ENCODE measurements at regions of chr4 and their contacts with region 1.

Region 1: DNA sequence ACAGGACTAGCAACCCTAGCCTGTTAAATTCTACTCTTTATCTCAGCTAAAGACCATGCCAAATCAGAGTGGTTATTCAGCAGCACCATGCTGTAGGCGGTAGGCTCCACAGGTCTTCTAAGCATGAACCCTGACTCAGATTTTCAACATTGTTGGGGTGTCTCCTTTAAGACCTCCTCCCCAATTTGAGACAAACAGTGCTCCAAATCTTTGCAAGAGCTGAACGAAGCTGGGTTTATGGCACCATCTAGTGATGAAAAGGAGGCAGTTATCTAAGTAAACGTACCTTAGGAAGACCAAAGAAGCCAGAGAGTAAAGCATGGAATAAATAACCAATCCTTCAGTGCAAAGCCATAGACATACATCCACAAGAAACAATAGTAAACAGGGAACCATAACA is 334.5 kb upstream of the SLC7A11 start:
- DNase-seq: peak; percentile 73
- H3K4me3 ChIP-seq: no peak overlapping the region
- H3K27ac ChIP-seq: no peak overlapping the region
- H3K4me1 ChIP-seq: no peaks in the 10 kb centered on the region
- H3K27me3 ChIP-seq: no peaks in the 10 kb centered on the region
- CTCF ChIP-seq: peak; percentile 75

Region 2: GRCh38 chr4:137735561-137736104 is 841.1 kb before region 1 on chr4:
- CTCF ChIA-PET with region 1: interaction called, 3 read pairs
- POLR2A ChIA-PET with region 1: no interaction called
- intact Hi-C with region 1: loop called (anchors 10 kb)
- DNase-seq: no peak
- H3K4me3 ChIP-seq: no peak overlapping the region
- H3K27ac ChIP-seq: no peak overlapping the region
- H3K4me1 ChIP-seq: no peaks in the 10 kb centered on the region
- H3K27me3 ChIP-seq: no peaks in the 10 kb centered on the region
- CTCF ChIP-seq: no peak

Region 3: GRCh38 chr4:137819964-137820383 is 756.7 kb before region 1 on chr4:
- CTCF ChIA-PET with region 1: no interaction called
- POLR2A ChIA-PET with region 1: no interaction called
- intact Hi-C with region 1: loop called (anchors 5 kb)
- DNase-seq: peak; percentile 65
- H3K4me3 ChIP-seq: no peak overlapping the region
- H3K27ac ChIP-seq: no peak overlapping the region
- H3K4me1 ChIP-seq: no peaks in the 10 kb centered on the region
- H3K27me3 ChIP-seq: no peaks in the 10 kb centered on the region
- CTCF ChIP-seq: peak; percentile 77

Region 4: GRCh38 chr4:138182838-138183426 is 393.8 kb before region 1 on chr4:
- CTCF ChIA-PET with region 1: interaction called, 4 read pairs
- POLR2A ChIA-PET with region 1: no interaction called
- intact Hi-C with region 1: loop called (anchors 10 kb)
- DNase-seq: peak; percentile 63
- H3K4me3 ChIP-seq: no peak overlapping the region
- H3K27ac ChIP-seq: no peak overlapping the region
- H3K4me1 ChIP-seq: peaks cover 31% of the 10 kb centered on the region
- H3K27me3 ChIP-seq: no peaks in the 10 kb centered on the region
- CTCF ChIP-seq: peak; percentile 74

Region 5: GRCh38 chr4:138275764-138276621 is 300.7 kb before region 1 on chr4:
- CTCF ChIA-PET with region 1: no interaction called
- POLR2A ChIA-PET with region 1: no interaction called
- intact Hi-C with region 1: no loop called
- DNase-seq: no peak
- H3K4me3 ChIP-seq: no peak overlapping the region
- H3K27ac ChIP-seq: no peak overlapping the region
- H3K4me1 ChIP-seq: no peaks in the 10 kb centered on the region
- H3K27me3 ChIP-seq: no peaks in the 10 kb centered on the region
- CTCF ChIP-seq: no peak

Region 6: GRCh38 chr4:138870737-138871554 is 294.3 kb after region 1 on chr4:
- CTCF ChIA-PET with region 1: interaction called, 20 read pairs
- POLR2A ChIA-PET with region 1: no interaction called
- intact Hi-C with region 1: loop called (anchors 5 kb)
- DNase-seq: peak; percentile 85
- H3K4me3 ChIP-seq: no peak overlapping the region
- H3K27ac ChIP-seq: no peak overlapping the region
- H3K4me1 ChIP-seq: no peaks in the 10 kb centered on the region
- H3K27me3 ChIP-seq: no peaks in the 10 kb centered on the region
- CTCF ChIP-seq: peak; percentile 88

Region 7: DNA sequence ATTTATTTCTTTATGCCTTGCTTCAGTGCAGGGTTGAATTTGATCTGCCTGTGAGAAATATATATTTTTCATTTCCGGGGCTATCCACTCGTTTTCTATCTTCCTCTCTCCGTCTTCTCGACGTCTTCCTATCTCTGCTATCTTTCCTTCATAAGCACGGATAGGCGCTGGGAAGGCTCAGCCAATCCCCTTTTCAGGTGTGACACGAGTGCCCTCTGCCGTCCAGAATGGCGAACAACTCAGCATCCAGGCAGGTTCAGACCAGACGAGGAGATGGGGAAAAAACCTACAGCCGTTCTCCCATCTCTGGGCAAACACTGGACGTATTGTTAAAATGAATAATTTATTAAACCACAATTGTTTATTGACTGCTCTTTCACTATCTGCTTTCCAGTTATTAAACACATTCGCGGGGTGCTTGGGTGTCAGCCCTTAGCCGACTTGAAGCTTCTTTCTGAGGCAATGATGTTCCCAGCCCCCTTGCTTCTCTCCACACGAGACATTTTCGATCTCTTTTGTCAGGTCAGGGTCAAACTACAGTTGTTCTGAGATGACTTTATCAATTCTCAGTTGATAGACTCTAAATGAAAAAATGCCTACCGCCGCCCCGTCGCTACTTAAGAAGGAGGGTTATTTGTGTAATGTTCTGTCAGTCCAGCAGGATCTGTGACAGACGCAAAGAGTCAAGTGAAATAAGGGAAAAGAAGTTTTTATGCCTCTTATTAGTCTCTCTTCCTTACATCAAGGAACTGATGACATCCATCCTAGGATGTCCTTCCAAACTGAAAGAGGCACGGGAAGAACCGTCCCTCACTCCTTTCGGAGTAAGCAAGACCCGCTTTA is 342.6 kb after region 1 on chr4:
- CTCF ChIA-PET with region 1: no interaction called
- POLR2A ChIA-PET with region 1: no interaction called
- intact Hi-C with region 1: loop called (anchors 5 kb)
- DNase-seq: peak; percentile 87
- H3K4me3 ChIP-seq: peak overlapping the region; percentile 11
- H3K27ac ChIP-seq: no peak overlapping the region
- H3K4me1 ChIP-seq: no peaks in the 10 kb centered on the region
- H3K27me3 ChIP-seq: no peaks in the 10 kb centered on the region
- CTCF ChIP-seq: peak; percentile 93

Measured in A673 (cell line).